ENCODE measurements at regions of chr2 and their contacts with region 1.

Region 1: GRCh38 chr2:9644603-9645002 is 13.8 kb upstream of the YWHAQ start:
- DNase-seq: no peak
- ATAC-seq: no peak
- H3K4me3 ChIP-seq: no peak overlapping the region
- H3K27ac ChIP-seq: no peak overlapping the region
- H3K4me1 ChIP-seq: peaks cover 0 to 6% (median 3%) of the 10 kb centered on the region in 12 donors
- H3K27me3 ChIP-seq: no peaks in the 10 kb centered on the region
- CTCF ChIP-seq: no peak
- POLR2A ChIP-seq: no peak

Region 2: GRCh38 chr2:9596621-9597311 is 47.8 kb before region 1 on chr2:
- intact Hi-C with region 1: no loop called
- DNase-seq: no peak
- ATAC-seq: no peak
- H3K4me3 ChIP-seq: peak overlapping the region in 1 of 12 donors; percentile 7
- H3K27ac ChIP-seq: peak overlapping the region in 1 of 12 donors; percentile 65
- H3K4me1 ChIP-seq: peaks cover 0 to 47% (median 38%) of the 10 kb centered on the region in 12 donors
- H3K27me3 ChIP-seq: no peaks in the 10 kb centered on the region
- CTCF ChIP-seq: no peak
- POLR2A ChIP-seq: no peak

Region 3: DNA sequence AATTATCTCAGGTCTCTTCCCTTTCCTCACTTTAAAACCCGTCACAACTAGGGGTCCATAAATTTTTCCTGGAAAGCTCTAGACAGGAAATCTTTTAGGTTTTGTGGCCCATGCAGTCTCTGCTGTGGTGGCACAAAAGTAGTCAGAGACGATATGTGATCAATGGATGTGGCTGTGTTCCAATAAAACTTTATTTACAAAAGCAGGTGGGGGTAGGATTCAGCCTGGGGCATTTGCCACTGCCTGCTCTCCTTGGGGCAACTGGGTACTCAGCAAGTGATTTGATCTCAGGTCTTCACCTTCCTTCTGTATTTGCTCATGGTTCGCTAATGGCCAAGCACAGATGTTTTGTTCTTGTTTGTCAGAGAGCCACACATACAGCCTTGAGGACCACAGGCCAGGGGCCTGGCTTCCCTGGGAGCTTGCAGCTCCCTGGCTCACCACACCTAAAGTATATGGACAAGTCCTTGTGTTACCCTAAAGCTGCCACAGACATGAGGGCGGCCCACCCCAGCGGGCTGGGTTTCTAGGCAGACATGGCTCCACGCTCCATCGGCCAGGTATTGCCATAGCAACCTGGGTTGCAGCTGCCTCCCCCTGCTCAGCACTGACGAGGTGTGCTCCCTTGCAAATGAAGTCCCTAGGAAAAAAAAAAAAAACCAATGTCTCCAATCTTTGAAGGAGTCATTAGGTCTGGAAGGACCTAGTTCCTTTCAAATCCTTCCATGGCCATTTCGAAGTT is 75.9 kb after region 1 on chr2:
- intact Hi-C with region 1: loop called in 1 of 10 experiments (anchors 5 kb)
- DNase-seq: no peak
- ATAC-seq: no peak
- H3K4me3 ChIP-seq: no peak overlapping the region
- H3K27ac ChIP-seq: no peak overlapping the region
- H3K4me1 ChIP-seq: no peaks in the 10 kb centered on the region
- H3K27me3 ChIP-seq: no peaks in the 10 kb centered on the region
- CTCF ChIP-seq: no peak
- POLR2A ChIP-seq: no peak